ENCODE measurements at regions of chr15 and their contacts with region 1.

Region 1: DNA sequence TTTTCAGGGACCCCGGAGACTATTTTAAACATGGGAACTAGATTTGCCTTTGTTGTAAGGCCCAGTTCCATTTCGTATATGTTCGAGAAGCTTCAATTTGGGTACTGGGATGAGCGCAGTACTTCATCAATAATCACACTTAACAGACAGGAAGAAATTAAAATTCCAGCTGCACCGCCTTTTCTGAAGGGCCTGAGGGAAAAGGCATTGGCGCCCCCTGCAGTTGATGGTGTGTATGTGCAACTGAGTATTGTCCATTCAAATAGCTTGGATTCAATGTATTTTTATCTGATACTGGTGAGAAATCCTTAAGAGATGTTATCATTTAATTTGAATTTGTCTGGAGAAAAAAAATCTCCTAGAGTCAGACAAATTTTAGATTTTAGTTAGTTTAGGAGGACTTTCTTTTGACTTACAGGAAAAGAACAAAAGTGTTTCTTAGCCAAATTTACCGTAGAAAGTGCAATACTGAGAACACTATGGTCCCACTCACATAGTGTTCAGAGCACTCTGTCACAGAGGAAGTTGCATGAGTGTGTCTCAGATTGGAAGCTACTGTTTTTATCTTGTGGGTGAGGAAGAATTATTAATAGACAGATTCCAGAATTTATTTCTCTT is 5.4 kb upstream of the ALDH1A2 start:
- DNase-seq: peak; percentile 61
- ATAC-seq: no peak
- H3K4me3 Mint-ChIP-seq: no peak overlapping the region
- H3K27ac Mint-ChIP-seq: no peak overlapping the region
- H3K4me1 Mint-ChIP-seq: peaks cover 3% of the 10 kb centered on the region
- H3K27me3 Mint-ChIP-seq: peaks cover 27% of the 10 kb centered on the region
- CTCF ChIP-seq: peak; percentile 95

Region 2: GRCh38 chr15:57866149-57866736 is 204.7 kb before region 1 on chr15:
- CTCF ChIA-PET with region 1: interaction called, 25 read pairs
- POLR2A ChIA-PET with region 1: no interaction called
- intact Hi-C with region 1: loop called (anchors 5 kb)
- DNase-seq: peak; percentile 78
- ATAC-seq: peak; percentile 64
- H3K4me3 Mint-ChIP-seq: no peak overlapping the region
- H3K27ac Mint-ChIP-seq: no peak overlapping the region
- H3K4me1 Mint-ChIP-seq: peaks cover 7% of the 10 kb centered on the region
- H3K27me3 Mint-ChIP-seq: peaks cover 27% of the 10 kb centered on the region
- CTCF ChIP-seq: peak; percentile 87

Region 3: GRCh38 chr15:57932348-57932747 is 138.6 kb before region 1 on chr15:
- CTCF ChIA-PET with region 1: no interaction called
- POLR2A ChIA-PET with region 1: no interaction called
- intact Hi-C with region 1: no loop called
- DNase-seq: no peak
- ATAC-seq: no peak
- H3K4me3 Mint-ChIP-seq: no peak overlapping the region
- H3K27ac Mint-ChIP-seq: no peak overlapping the region
- H3K4me1 Mint-ChIP-seq: no peaks in the 10 kb centered on the region
- H3K27me3 Mint-ChIP-seq: peaks cover 21% of the 10 kb centered on the region
- CTCF ChIP-seq: no peak

Region 4: GRCh38 chr15:58043192-58043903 is 27.6 kb before region 1 on chr15:
- CTCF ChIA-PET with region 1: interaction called, 24 read pairs
- POLR2A ChIA-PET with region 1: no interaction called
- intact Hi-C with region 1: no loop called
- DNase-seq: peak; percentile 71
- ATAC-seq: no peak
- H3K4me3 Mint-ChIP-seq: no peak overlapping the region
- H3K27ac Mint-ChIP-seq: no peak overlapping the region
- H3K4me1 Mint-ChIP-seq: no peaks in the 10 kb centered on the region
- H3K27me3 Mint-ChIP-seq: peaks cover 30% of the 10 kb centered on the region
- CTCF ChIP-seq: peak; percentile 63

Region 5: GRCh38 chr15:58086491-58086890 is 15.6 kb after region 1 on chr15:
- CTCF ChIA-PET with region 1: interaction called, 14 read pairs
- POLR2A ChIA-PET with region 1: no interaction called
- intact Hi-C with region 1: no loop called
- DNase-seq: no peak
- ATAC-seq: no peak
- H3K4me3 Mint-ChIP-seq: no peak overlapping the region
- H3K27ac Mint-ChIP-seq: no peak overlapping the region
- H3K4me1 Mint-ChIP-seq: peaks cover 12% of the 10 kb centered on the region
- H3K27me3 Mint-ChIP-seq: peaks cover 26% of the 10 kb centered on the region
- CTCF ChIP-seq: no peak

Region 6: DNA sequence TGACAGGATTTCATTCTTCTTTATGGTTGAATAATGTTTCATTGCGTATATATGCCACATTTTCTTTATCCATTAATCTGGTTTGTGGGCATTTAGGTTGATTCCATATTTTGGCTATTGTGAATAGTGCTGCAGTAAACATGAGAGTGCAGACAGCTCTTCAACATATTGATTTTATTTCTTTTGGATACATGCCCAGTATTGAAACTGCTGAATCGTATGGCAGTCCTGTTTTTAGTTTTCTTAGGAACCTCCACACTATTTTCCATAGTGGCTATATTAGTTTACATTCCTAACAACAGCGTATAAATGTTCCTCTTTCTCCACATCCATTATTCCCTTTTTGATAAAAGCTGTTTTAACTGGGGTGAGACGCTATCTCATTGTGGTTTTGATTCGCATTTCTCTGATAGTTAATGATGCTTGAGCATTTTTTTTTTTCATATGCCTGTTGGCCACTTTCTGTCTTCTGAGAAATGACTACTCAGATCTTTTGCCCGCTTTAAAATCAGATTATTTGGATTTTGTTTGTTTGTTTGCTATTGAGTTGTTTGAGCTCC is 89.0 kb after region 1 on chr15:
- CTCF ChIA-PET with region 1: no interaction called
- POLR2A ChIA-PET with region 1: no interaction called
- intact Hi-C with region 1: no loop called
- DNase-seq: no peak
- ATAC-seq: no peak
- H3K4me3 Mint-ChIP-seq: no peak overlapping the region
- H3K27ac Mint-ChIP-seq: no peak overlapping the region
- H3K4me1 Mint-ChIP-seq: no peaks in the 10 kb centered on the region
- H3K27me3 Mint-ChIP-seq: peaks cover 18% of the 10 kb centered on the region
- CTCF ChIP-seq: no peak

Region 7: DNA sequence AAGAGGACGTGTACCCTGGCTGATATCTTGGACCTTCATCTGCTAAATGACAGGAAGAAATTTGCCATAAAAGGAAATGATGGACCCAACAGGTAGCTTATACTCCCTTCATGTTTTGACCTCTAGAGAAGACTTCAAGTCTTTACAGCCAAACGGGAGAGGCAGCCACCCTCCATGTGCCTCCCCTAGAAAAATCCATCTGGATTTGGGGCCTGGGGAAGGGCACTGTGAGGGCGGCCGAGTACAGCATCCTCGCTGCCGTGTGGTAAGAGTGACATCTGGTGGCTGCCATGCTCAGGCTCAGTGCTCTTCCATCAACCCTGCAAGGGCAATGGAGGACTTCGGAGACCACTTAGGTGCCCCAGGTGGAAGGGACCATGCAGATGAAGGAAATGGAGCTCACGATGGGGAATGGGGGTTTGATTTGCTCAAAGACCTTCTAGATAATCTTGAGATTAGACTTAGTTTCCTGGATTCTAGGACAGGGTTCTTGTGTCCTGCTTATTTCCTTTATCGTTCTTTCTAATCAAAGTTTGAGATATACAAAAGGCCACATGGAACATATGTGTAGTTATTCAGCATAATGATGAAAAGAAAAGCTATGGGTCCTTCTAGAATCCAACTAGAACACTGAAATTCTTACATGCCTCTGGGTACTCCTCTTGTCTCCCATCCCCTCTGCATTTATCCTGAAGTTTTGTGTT is 111.7 kb after region 1 on chr15:
- CTCF ChIA-PET with region 1: interaction called, 19 read pairs
- POLR2A ChIA-PET with region 1: no interaction called
- intact Hi-C with region 1: loop called (anchors 10 kb)
- DNase-seq: peak; percentile 48
- ATAC-seq: peak; percentile 69
- H3K4me3 Mint-ChIP-seq: no peak overlapping the region
- H3K27ac Mint-ChIP-seq: no peak overlapping the region
- H3K4me1 Mint-ChIP-seq: peaks cover 8% of the 10 kb centered on the region
- H3K27me3 Mint-ChIP-seq: peaks cover 37% of the 10 kb centered on the region
- CTCF ChIP-seq: peak; percentile 72

Measured in activated CD8-positive, alpha-beta T cell treated with anti-CD3 and anti-CD28 coated beads for 36 hours (primary cell).